ENCODE measurements at regions of chr16 and their contacts with region 1.

Region 1: DNA sequence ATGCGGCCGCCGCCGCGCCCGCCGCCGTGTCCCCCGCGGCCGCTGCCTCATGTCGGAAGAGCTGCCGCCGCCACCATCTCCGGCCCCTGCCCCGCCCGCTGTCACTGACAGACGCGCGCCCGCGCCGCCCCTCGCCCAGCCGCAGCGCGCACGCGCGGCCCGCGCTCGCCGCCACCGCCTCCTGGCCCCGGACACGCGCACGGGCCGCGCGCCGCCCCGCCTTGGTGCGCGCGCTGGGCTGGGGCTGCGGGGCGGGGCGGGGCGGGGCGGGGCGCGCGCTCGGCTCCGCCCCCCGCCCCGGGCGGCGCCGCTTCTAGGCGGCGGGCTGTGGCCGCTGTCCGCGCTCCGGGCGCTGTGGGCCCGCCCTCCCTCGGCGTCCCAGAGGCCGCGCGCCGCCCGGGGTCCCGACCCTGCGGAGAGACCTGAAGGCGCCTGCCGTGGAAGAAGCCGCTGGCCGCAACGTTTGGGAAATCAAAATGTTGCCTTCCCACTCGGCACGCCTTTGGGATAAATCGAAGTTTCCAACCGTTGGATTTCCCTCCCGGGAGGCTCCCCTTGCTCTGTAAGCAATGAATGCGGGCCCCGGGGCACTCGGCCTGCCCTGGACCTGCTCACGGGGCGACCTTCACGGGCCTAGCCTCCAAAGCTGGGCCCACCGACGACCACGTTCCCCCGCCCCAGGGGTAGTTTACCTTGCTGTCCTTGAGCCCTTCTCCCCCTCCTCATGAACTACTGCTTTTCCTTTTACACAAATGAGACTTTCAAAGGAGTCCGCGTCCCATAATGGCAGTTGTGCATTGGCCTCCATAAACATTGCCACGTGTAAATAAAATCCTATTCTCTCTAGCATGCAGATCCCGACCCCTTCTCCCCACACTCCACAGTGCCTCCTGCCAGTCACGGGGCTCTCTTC is at the start of gene ADCY9:
- DNase-seq: peak; percentile 86
- total RNA-seq, gene ADCY9: 44.0 TPM

Region 2: GRCh38 chr16:4053301-4053845 is 63.2 kb before region 1 on chr16:
- intact Hi-C with region 1: loop called (anchors 10 kb)
- DNase-seq: peak; percentile 85

Region 3: DNA sequence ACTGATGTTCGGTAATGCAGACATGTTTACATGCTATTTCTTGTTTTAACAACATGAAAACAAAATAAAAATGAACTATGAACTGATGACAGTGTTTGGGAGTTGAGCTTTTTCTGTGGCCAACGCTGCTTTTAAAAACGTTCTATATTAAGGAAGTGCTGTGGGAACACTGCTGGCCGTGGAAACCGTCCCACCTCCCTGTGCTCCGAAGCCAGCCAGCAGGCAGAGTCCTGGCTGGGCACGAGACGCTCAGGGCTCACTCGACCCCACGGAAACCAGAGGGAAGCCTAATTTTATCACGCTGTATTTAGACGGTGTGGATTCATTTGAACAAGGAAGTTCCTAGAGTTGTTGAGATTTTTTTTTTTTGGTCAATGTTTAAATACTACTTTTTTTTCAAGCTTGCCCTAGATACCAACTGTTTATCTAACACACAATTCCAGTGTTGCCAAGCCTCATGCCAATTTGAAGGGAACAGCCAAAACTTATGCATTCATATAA is 26.2 kb before region 1 on chr16:
- intact Hi-C with region 1: loop called (anchors 2 kb)
- DNase-seq: peak; percentile 83

Region 4: GRCh38 chr16:4183237-4184036 is 66.8 kb after region 1 on chr16:
- intact Hi-C with region 1: loop called (anchors 5 kb)
- DNase-seq: peak; percentile 97

Region 5: DNA sequence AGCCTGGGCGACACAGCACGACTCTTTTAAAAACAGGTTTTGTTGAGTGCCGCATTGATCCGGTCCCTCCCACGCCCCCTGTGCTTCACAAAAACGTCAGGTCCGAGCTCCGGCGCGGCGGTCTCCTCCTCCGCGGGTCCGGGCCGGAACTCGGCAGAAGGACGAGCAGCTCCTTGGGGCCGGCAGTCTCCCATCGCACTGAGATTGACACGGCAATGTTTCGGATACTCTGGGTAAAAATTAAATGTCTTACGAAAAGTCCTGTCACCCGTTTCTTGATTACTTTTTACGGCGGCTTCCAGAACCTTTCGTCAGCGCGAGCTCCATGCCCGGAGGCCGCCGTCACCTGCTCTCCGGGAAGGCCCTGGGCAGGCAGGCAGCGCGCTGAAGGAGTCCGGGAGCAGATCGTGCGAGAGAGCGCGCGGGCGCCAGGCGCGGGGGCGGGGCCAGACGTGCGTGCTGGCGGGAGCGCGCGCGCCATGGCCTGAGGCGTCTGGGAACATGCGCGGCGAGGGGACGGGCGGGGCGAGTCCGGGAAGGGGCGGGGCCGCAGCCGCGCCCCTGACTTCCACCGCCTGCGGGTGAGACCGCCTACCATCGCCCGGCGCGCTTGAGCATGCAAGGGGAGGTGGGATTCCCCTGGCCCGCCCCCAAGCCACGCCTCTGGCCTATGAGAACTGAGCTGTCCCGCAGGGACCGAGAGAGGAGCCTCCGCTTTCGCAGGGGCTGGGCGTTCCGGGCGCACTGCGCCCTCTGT is 137.0 kb after region 1 on chr16:
- intact Hi-C with region 1: loop called (anchors 5 kb)
- DNase-seq: peak; percentile 100

Measured in cardiac septum (tissue), 1 donor.